AG04450 (cell line): ENCODE measurements at regions of chr10 and their contacts with region 1.

Region 1: GRCh38 chr10:48363617-48364355 is 57.3 kb downstream of the MAPK8 start:
- DNase-seq: peak; percentile 51
- H3K4me3 ChIP-seq: no peak overlapping the region
- H3K27ac ChIP-seq: no peak overlapping the region
- H3K27me3 ChIP-seq: no peaks in the 10 kb centered on the region
- CTCF ChIP-seq: peak; percentile 80

Region 2: DNA sequence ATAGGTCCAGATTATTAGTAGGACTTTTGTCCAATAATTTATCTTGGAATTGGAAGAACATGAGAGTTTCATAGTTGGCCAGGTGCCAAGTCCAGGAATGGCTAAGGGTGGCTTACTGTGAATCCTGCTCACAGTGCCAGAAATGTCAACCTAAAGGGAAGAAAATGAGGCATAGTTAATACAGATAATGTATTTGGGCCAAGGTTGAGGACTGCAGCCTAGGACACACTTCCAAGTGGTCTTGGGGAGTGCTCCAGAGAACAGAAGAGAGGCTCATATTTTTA is 20.9 kb after region 1 on chr10:
- CTCF ChIA-PET with region 1: interaction called, 16 read pairs
- POLR2A ChIA-PET with region 1: no interaction called
- DNase-seq: no peak
- H3K4me3 ChIP-seq: no peak overlapping the region
- H3K27ac ChIP-seq: no peak overlapping the region
- H3K27me3 ChIP-seq: no peaks in the 10 kb centered on the region
- CTCF ChIP-seq: no peak

Region 3: DNA sequence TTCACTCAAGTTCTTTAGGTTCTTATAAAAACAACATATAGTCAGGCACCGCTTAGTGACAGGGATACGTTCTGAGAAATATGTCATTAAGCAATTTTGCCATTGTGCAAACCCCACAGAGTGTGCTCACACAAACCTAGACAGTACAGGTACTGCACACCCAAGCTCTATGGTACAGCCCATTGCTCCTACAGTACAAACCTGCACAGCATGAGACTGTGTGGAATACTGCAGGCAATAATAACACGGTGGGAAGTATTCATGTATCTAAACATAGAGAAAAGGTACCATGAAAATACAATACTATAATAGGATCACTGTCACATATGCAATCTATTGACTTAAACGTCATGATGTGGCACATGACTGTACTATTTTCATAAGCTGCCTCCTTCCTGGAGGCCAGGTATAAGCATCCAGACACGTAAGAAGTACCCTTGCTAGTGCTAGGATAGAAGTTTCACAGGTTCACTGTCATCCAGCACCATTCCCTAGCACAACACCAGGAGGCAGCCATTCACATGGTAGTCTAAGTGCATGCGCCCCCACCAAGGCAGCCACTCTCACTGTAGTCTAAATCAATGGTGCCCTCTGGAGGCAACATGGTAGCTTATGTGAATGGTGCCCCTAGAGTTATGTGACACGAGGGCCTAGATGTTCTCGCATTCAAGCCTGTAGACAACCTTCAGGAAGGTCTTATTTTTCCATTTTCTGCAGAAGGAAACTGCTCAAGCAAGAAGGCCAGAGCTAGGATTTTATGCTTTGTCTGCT is 142.5 kb after region 1 on chr10:
- CTCF ChIA-PET with region 1: interaction called, 21 read pairs
- POLR2A ChIA-PET with region 1: no interaction called
- DNase-seq: no peak
- H3K4me3 ChIP-seq: no peak overlapping the region
- H3K27ac ChIP-seq: no peak overlapping the region
- H3K27me3 ChIP-seq: no peaks in the 10 kb centered on the region
- CTCF ChIP-seq: peak; percentile 46

Region 4: DNA sequence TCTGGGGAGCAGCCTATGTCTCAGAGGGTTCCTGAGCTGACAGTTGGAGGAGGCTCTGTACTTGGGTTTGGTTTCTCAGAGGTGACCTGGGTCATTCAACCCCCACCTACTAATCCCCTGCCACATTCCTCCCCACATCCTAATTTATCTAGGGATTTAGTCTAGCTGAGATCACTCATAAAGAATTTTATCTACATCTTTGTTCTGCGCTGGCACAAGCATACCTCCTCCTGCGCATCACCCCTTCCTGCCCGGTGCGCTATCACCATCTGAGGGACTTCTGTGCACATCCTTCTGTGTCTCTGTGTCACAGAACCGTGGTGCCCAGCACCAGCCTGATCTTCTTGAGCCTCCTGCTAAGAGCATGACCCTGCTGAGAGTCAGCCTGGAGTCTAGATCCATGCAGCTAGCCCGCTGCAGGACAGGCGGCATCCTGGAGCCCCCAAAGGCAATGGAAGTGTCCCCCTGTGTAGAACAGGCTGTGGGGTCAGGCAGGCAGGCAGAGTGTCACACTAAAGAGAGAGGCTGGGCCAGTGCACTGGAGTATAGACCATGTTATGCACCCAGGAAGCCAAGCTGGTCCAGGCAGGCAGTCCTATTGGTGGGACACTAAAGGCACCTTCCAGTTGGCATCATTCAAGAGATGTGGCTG is 177.5 kb after region 1 on chr10:
- CTCF ChIA-PET with region 1: interaction called, 11 read pairs
- POLR2A ChIA-PET with region 1: no interaction called
- DNase-seq: no peak
- H3K4me3 ChIP-seq: no peak overlapping the region
- H3K27ac ChIP-seq: no peak overlapping the region
- H3K27me3 ChIP-seq: no peaks in the 10 kb centered on the region
- CTCF ChIP-seq: no peak

Region 5: GRCh38 chr10:48608279-48608681 is 244.5 kb after region 1 on chr10:
- CTCF ChIA-PET with region 1: interaction called, 10 read pairs
- POLR2A ChIA-PET with region 1: interaction called, 3 read pairs
- DNase-seq: no peak
- H3K4me3 ChIP-seq: no peak overlapping the region
- H3K27ac ChIP-seq: no peak overlapping the region
- H3K27me3 ChIP-seq: no peaks in the 10 kb centered on the region
- CTCF ChIP-seq: peak; percentile 75

Region 6: GRCh38 chr10:49526619-49527018 is 1162.8 kb after region 1 on chr10:
- CTCF ChIA-PET with region 1: no interaction called
- POLR2A ChIA-PET with region 1: no interaction called
- DNase-seq: no peak
- H3K4me3 ChIP-seq: no peak overlapping the region
- H3K27ac ChIP-seq: no peak overlapping the region
- H3K27me3 ChIP-seq: no peaks in the 10 kb centered on the region
- CTCF ChIP-seq: no peak